Dorsolateral prefrontal cortex (tissue), 120 donors: ENCODE measurements at regions of chr19 and their contacts with region 1.

Region 1: DNA sequence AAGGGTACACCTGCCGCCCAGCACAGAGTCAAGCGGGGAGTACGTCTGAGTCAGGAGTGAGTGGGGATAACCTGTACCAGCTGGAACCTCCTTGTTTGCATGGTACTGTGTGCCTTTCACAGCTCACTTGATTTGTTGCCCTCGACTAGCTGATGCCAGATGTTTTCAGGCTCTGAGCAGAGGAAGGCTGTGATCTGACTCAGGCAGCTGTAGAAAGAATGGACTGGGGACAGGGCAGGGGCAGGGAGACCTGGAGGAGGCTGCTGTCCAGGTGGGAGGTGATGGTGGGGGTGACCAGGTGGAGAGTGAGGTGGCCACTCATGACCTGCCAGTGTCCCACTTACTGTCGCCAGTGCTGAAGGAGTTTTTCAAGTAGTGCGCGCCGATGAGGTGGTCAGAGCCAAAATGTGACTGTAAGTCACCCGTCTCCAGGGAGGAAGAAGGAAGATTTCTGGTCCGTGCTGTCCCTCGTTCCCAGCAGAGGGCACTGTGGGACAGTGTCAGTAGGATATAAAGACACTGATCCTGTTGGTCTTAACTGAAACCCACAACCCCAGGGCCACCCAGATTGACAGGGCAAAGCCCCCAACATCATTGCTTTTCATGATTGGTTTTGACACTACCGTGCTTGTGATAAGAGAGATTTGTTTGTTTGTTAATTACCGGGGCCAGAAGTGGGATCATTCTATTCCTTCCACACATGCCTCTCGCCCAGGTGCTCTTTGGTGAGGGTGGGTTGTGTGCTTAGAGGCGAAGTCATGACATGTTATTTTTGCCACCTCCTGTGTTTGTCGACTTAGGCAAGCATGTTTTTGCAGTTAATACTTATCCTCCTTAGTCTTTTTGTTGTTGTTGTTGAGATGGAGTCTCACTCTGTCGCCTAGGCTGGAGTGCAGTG is 128.4 kb downstream of the DPF1 start:
- DNase-seq: peak; percentile 59 to 90 (median 80)
- H3K4me3 ChIP-seq: peak overlapping the region in 1 of 59 donors; percentile 23
- H3K27ac ChIP-seq: peak overlapping the region in 10 of 59 donors; percentile 4 to 51 (median 26)
- H3K27me3 ChIP-seq: no peaks in the 10 kb centered on the region
- CTCF ChIP-seq: peak; percentile 38 to 82 (median 70)

Region 2: GRCh38 chr19:37987356-37988332 is 108.0 kb before region 1 on chr19:
- intact Hi-C with region 1: no loop called
- DNase-seq: no peak
- H3K4me3 ChIP-seq: no peak overlapping the region
- H3K27ac ChIP-seq: peak overlapping the region in 1 of 59 donors; percentile 1
- H3K27me3 ChIP-seq: no peaks in the 10 kb centered on the region
- CTCF ChIP-seq: peak in 5 of 56 donors; percentile 9 to 27 (median 14)

Region 3: DNA sequence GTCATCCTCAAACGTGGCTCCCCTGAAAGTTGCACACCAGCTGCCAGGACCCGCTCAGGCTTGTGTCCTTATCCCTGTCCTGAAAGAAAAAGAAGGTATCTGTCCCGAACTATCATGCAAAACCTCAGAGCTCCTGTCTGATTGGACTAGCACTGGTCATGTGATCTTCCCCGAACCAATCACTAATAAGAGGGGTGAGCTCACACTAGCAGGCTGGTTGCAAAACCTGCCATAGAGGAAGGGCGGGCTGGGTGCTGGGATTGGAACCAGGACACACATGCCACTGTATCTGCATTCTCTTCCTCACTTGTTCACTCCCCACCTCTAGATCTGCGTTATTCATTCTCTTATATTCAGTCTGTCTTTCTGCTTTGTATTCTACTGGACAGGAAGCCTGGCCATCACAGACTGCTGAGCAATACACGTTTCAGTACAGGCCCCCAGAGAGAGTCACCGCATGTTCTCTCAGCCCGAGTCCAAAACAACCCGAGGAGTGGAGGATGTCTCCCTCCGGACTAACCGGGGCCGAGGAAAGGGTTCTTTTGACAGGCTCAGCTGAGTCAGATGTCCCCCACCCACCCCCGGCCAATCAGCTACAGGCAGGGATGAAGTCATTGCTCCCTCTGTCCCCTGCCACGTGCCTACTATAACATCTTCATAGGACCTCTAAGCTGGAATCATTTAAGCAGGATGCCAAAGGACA is 91.0 kb before region 1 on chr19:
- intact Hi-C with region 1: loop called in 1 of 2 experiments (anchors 10 kb)
- DNase-seq: peak; percentile 71 to 97 (median 90)
- H3K4me3 ChIP-seq: peak overlapping the region; percentile 28 to 77 (median 61)
- H3K27ac ChIP-seq: peak overlapping the region; percentile 63 to 98 (median 93)
- H3K27me3 ChIP-seq: no peaks in the 10 kb centered on the region
- CTCF ChIP-seq: peak in 3 of 56 donors; percentile 13 to 17 (median 13)

Region 4: GRCh38 chr19:38606131-38606530 is 510.5 kb after region 1 on chr19:
- intact Hi-C with region 1: loop called in 1 of 2 experiments (anchors 5 kb)
- DNase-seq: no peak
- H3K4me3 ChIP-seq: no peak overlapping the region
- H3K27ac ChIP-seq: no peak overlapping the region
- H3K27me3 ChIP-seq: no peaks in the 10 kb centered on the region
- CTCF ChIP-seq: no peak